ENCODE measurements at regions of chr3 and their contacts with region 1.

Region 1: GRCh38 chr3:10015461-10015904 is 10.8 kb upstream of the FANCD2 start:
- DNase-seq: peak; percentile 92 to 95
- H3K4me3 ChIP-seq: no peak overlapping the region
- H3K27ac ChIP-seq: peak overlapping the region; percentile 85 to 91
- H3K4me1 ChIP-seq: no peaks in the 10 kb centered on the region
- H3K27me3 ChIP-seq: no peaks in the 10 kb centered on the region
- CTCF ChIP-seq: no peak
- POLR2A ChIP-seq: no peak

Region 2: GRCh38 chr3:9957214-9957613 is 58.3 kb before region 1 on chr3:
- intact Hi-C with region 1: loop called (anchors 5 kb)
- DNase-seq: no peak
- H3K4me3 ChIP-seq: no peak overlapping the region
- H3K27ac ChIP-seq: no peak overlapping the region
- H3K4me1 ChIP-seq: no peaks in the 10 kb centered on the region
- H3K27me3 ChIP-seq: no peaks in the 10 kb centered on the region
- CTCF ChIP-seq: no peak
- POLR2A ChIP-seq: no peak

Region 3: DNA sequence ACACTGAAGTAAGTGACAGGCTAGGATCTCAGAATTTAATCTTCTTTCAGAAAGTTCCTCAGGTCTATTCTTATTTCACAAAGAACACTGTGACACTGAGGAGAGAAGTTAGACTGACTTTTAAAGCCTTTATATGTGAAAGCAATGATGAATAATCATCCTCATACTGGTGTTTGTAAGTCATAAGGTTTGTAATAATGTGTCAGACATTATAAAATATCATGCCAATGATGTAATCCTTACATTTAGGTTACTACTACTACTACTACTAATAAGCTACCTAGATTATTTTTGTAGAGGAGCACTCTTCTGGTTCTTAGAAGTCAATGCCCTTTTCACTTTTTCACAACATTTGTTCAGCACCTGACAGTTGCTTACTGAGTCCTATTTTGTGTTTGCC is 59.2 kb after region 1 on chr3:
- intact Hi-C with region 1: no loop called
- DNase-seq: no peak
- H3K4me3 ChIP-seq: no peak overlapping the region
- H3K27ac ChIP-seq: no peak overlapping the region
- H3K4me1 ChIP-seq: no peaks in the 10 kb centered on the region
- H3K27me3 ChIP-seq: no peaks in the 10 kb centered on the region
- CTCF ChIP-seq: no peak
- POLR2A ChIP-seq: no peak

Region 4: GRCh38 chr3:10286596-10287330 is 271.3 kb after region 1 on chr3:
- intact Hi-C with region 1: no loop called
- DNase-seq: peak in 1 of 2 donors; percentile 53
- H3K4me3 ChIP-seq: no peak overlapping the region
- H3K27ac ChIP-seq: no peak overlapping the region
- H3K4me1 ChIP-seq: no peaks in the 10 kb centered on the region
- H3K27me3 ChIP-seq: no peaks in the 10 kb centered on the region
- CTCF ChIP-seq: peak in 1 of 4 experiments; percentile 35
- POLR2A ChIP-seq: no peak